Dorsolateral prefrontal cortex (tissue), 120 donors: ENCODE measurements at regions of chr11 and their contacts with region 1.

Region 1: DNA sequence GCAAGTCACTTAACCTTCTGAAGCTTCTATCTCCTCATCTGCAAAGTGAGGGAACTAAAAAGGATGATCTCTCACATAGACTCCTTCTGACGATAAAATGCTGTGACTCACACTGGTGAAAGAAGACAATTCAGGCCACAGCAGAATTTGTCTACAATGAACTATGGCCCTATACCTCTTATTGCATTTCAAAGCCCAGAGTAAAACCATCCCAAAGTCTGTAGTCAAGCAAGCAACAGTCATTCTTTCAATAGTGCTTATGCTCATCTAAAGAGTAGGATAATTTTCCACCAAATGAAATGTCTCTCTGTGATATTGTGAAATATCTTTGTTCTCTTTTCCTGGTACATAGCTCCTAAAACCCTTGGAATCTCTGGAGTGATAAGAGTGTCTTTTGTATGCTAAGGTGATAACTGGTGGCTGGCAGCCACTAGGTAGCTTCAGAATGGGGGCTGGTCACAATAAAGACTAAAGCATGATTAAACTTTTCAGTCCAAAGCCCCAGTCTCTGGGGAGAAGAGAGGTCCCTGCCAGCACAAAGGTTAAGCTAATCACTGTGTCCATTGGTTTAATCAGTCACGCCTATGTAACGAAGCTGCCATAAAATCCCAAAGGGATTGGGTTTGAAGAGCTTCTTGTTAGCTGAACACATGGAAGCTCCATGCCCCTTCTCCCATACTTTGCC is 30.8 kb downstream of the SYTL2 start:
- DNase-seq: no peak
- H3K4me3 ChIP-seq: no peak overlapping the region
- H3K27ac ChIP-seq: peak overlapping the region in 11 of 59 donors; percentile 1 to 40 (median 22)
- H3K27me3 ChIP-seq: no peaks in the 10 kb centered on the region
- CTCF ChIP-seq: no peak

Region 2: GRCh38 chr11:85724748-85725465 is 55.2 kb before region 1 on chr11:
- intact Hi-C with region 1: loop called in 1 of 2 experiments (anchors 5 kb)
- DNase-seq: no peak
- H3K4me3 ChIP-seq: no peak overlapping the region
- H3K27ac ChIP-seq: no peak overlapping the region
- H3K27me3 ChIP-seq: no peaks in the 10 kb centered on the region
- CTCF ChIP-seq: no peak